ENCODE measurements at regions of chr1 and their contacts with region 1.

Region 1: GRCh38 chr1:162035241-162035640 is 11.6 kb upstream of the OLFML2B start:
- DNase-seq: no peak
- H3K4me3 Mint-ChIP-seq: no peak overlapping the region
- H3K27ac Mint-ChIP-seq: no peak overlapping the region
- H3K4me1 Mint-ChIP-seq: peaks cover 5% of the 10 kb centered on the region
- H3K27me3 Mint-ChIP-seq: peaks cover 33% of the 10 kb centered on the region

Region 2: DNA sequence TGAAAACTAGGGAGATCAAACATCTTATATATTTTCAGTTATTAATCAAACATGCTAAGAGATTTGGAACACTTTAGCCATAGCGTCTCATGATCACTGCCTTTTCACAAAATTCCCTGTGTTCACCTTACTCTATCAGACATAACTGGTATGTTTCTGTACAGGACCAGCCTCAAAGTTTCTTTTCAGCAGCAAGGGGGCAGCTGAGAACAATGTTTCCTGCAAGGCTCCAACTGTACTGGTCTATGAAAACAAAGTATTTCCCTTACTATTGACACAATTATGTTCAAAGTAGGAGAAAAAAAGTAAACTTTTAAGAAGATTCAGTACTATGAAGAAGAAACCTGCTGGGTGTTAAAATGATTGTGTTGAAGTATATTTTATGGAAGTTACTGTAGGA is 170.7 kb before region 1 on chr1:
- intact Hi-C with region 1: loop called (anchors 5 kb)
- DNase-seq: no peak
- H3K4me3 Mint-ChIP-seq: no peak overlapping the region
- H3K27ac Mint-ChIP-seq: no peak overlapping the region
- H3K4me1 Mint-ChIP-seq: no peaks in the 10 kb centered on the region
- H3K27me3 Mint-ChIP-seq: no peaks in the 10 kb centered on the region

Region 3: DNA sequence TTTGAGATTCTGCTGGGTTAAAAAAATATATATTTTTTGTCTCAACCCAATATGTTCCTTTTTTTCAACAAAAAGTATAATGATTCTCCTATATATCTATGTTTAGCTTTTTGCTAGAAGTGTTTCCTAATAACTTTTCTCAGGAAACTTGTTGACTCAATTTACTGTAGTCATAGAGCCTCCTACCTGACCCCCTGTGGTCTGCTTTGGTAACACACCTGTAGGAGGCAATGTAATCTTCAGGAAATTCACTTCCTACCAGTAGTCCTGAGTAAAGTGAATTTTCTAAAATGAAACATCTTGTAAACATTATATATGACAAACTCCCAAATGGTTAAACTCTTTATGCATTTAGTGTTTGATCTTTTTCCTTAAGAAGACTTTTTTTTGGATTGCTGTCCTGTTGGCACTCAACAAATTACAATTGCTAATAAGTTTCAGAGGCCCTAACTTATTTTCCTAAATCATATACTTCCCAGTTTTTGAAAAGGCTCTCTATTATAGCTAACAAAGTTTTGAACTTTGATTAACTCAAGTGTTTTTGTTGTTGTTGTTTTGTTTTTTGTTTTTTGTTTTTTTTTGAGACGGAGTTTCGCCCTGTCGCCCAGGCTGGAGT is 129.9 kb before region 1 on chr1:
- intact Hi-C with region 1: loop called (anchors 10 kb)
- DNase-seq: peak; percentile 74
- H3K4me3 Mint-ChIP-seq: no peak overlapping the region
- H3K27ac Mint-ChIP-seq: no peak overlapping the region
- H3K4me1 Mint-ChIP-seq: peaks cover 6% of the 10 kb centered on the region
- H3K27me3 Mint-ChIP-seq: no peaks in the 10 kb centered on the region

Region 4: GRCh38 chr1:161921990-161922389 is 113.3 kb before region 1 on chr1:
- intact Hi-C with region 1: no loop called
- DNase-seq: no peak
- H3K4me3 Mint-ChIP-seq: no peak overlapping the region
- H3K27ac Mint-ChIP-seq: no peak overlapping the region
- H3K4me1 Mint-ChIP-seq: peaks cover 13% of the 10 kb centered on the region
- H3K27me3 Mint-ChIP-seq: no peaks in the 10 kb centered on the region